Sigmoid colon (tissue), 7 donors: ENCODE measurements at regions of chr7 and their contacts with region 1.

Region 1: DNA sequence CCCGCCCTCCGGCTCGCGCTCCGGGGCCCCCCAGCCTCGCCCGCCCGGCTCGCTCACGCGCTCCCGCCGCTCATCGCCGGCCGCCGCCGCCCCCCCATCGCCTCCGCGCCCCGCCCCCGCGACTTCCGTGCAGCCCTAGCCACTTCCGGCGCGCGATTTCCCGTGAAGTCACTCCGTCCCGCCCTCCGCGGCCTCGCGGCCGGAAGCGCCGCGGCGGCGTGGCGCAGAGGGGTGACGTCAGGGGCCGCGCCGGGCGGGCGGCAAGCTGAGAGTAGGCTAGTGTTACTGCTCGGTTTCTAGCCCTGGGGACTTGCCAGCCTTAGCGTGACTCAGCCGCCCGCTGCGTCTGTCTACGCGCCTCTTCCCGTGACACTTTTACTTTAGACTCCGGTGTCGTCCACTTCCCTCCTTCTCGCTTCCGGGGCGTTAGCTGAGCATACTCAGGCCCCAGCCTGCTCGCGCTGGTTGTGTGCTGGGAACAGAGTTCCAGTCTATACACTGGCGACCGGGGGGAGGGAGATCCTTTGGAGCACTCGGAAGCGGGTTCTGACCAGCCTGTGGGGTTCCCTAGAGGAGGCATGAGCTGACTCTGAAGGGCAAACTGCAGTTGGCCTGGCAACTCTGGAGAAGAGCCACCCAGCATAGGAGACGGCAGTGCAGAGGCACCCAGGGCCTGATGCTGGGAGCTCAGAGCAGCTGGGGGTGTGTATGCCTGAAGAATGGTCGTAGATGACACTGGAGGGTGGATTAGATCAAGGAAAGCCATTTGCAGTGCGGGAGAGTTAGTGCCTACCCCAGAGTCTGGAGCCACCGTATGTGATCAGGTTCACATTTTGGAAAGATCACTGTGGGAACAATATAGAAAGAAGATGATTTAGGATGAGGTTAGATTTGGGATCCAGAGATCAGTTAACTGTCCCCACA is at the start of gene PURB:
- DNase-seq: peak; percentile 97
- H3K4me3 ChIP-seq: peak within 1 kb of the TSS; percentile 82 to 94 (median 92)
- H3K27ac ChIP-seq: peak within 1 kb of the TSS; percentile 99 to 100 (median 99)
- H3K4me1 ChIP-seq: peaks cover 0 to 52% (median 40%) of the 10 kb centered on the region in 4 donors
- H3K27me3 ChIP-seq: no peaks in the 10 kb centered on the region
- CTCF ChIP-seq: no peak
- EP300 ChIP-seq: peak in 2 of 4 donors; percentile 13 to 25
- POLR2A ChIP-seq: peak; percentile 88 to 93
- total RNA-seq, gene PURB: 31.4 to 40.3 (median 38.5) TPM

Region 2: DNA sequence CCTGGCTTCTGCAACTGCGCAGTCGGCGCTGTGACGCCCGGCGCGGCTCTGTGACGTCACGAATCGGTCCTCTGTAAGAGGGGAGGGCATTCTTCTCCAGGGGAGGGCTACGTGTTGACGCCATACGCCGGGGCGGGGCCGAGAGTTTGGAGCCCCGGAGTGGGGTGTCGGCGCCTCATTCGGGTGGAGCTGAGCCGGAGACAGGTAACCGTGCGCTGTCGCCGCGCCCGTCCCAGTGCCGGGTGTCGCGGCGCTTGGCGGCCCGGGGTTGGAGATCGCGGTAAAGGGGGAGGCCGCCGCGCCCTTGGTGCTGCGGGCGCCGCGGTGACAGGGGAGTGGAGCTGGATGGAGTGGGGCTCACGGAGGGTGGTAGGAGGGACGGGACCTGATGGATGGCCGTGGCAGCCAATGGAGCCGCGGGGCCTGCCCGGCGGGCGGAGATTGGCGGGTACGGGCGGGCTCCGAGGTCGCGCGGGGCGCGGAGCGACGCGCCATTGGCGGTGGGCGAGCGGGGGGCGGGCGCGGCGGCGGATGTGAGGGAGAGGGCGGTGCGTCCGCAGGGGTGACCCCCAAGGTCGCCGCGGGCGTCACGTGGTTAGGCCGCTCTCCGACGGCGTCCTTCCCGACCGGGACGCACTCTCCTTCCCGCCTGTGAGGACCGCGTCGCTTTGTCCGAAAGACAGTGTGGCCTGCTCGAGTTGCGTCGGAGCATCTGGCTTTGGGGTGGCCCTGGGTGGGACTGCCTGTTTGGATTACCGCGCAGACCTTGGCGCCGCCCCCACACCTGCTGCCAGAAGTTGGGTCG is 279.0 kb before region 1 on chr7 and contains the start of gene OGDH:
- intact Hi-C with region 1: loop called (anchors 5 kb)
- DNase-seq: peak; percentile 100
- H3K4me3 ChIP-seq: peak within 1 kb of the TSS; percentile 70 to 97 (median 78)
- H3K27ac ChIP-seq: peak within 1 kb of the TSS; percentile 97 to 100 (median 98)
- H3K4me1 ChIP-seq: peaks cover 0 to 32% (median 25%) of the 10 kb centered on the region in 4 donors
- H3K27me3 ChIP-seq: no peaks in the 10 kb centered on the region
- CTCF ChIP-seq: no peak
- EP300 ChIP-seq: peak in 2 of 4 donors; percentile 66 to 86
- POLR2A ChIP-seq: peak; percentile 57 to 97
- total RNA-seq, gene OGDH: 65.5 to 102 (median 98.3) TPM

Region 3: DNA sequence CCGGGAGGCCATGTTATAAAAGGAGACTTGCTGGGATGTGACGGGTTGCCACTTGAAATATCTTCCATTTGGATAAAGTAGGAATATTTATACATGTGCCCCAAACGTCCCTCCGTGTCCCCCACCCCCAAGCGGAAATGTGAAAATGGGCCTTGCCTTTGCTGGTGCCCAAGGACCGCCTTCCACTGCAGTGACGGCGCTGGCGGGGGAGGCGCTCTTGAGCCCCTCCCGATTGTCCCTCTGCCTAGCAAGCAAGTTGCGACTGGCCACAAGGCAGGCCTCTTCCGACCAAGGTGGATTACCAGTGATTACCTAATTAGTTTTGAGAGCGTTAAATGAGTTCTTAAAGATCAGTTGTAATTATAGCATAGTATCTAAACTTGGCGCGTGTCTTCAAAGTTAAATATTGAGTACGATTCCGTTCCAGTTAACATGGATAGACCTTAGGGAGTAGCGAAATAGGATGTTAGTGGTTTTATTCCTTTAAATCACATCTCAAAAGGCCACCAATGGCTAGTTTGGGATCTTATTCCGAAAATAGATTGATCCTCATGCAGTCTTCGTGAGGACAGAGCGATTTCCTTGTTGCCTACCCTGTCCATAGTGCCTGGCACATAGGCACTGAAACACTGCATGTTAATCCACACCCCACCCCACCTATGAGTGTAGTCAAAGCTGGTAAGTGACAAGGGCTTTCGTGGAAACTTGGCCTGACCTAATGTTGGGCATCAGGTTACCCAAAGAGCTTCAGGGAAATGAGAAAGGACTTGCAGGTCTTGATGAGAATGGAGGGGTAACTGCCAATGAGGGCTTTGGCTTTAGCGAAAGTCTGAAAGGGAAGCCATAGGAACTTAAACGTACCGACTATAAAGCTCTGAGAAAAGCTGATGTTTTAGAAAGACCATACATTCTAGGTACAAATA is 88.1 kb before region 1 on chr7:
- intact Hi-C with region 1: loop called (anchors 2 kb)
- DNase-seq: peak; percentile 95
- H3K4me3 ChIP-seq: peak overlapping the region; percentile 76 to 97 (median 95)
- H3K27ac ChIP-seq: peak overlapping the region; percentile 99 to 100 (median 100)
- H3K4me1 ChIP-seq: peaks cover 0 to 35% (median 26%) of the 10 kb centered on the region in 4 donors
- H3K27me3 ChIP-seq: no peaks in the 10 kb centered on the region
- CTCF ChIP-seq: peak in 2 of 4 experiments; percentile 31 to 35
- EP300 ChIP-seq: no peak
- POLR2A ChIP-seq: peak; percentile 10 to 29

Region 4: DNA sequence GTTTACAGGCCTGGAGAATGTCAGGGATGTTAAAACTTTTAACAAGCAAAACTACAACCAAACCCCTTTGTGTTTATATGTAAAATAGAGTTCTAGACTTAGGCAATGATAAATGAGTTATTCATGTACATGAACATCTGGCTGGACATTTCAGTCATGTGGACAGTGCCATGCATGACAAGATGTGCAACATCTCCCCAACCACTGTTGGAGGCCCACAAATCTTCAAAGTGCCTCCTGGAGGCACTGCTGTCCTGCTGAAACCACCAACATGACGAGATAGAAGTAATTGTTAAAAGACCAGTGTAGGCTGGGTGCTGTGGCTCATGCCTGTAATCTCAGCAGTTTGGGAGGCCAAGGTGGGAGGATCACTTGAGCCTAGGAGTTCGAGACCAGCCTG is 70.7 kb before region 1 on chr7:
- intact Hi-C with region 1: no loop called
- DNase-seq: no peak
- H3K4me3 ChIP-seq: no peak overlapping the region
- H3K27ac ChIP-seq: no peak overlapping the region
- H3K4me1 ChIP-seq: no peaks in the 10 kb centered on the region
- H3K27me3 ChIP-seq: no peaks in the 10 kb centered on the region
- CTCF ChIP-seq: no peak
- EP300 ChIP-seq: no peak
- POLR2A ChIP-seq: no peak

Region 5: DNA sequence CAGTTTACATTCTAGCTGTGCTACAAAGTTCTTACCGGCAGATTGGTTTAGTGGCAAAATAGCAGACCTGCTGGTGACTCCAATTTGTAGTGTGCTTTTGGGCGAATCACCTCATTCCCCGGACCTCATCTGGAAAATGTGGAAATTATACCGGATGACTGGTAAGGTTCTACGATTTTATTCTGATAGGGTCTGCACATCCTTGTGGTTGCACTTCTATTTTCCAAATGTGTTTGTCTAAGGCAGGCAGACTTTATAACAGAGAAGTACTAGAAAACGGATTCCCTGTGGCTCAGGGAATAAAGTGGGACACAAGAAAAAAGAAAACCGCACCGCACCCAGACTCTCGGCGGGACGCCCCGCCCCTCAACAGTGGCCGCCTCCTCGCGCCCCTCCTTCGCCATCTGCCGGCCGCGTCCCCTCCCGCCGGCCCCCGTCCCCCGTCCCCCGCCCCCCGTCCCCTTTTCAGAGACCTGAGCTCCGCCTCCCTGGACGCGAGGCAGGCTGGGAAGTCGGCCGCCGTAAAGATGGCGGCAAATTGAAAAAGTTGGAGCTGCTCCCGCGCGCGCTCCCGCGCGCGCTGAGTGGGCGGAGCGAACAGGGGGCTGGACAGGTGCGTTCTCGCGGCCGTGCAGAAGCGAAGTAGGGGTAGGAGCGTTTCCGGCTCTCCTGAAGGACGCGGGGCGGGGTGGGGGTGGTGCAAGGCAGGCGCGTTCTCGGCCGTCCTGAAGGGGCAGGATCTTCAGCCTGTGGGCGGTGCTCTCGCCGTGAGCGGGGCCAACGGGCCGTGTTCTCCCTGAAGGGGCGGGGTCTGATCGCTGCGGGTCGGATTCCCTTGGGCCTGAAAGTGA is 113.8 kb after region 1 on chr7:
- intact Hi-C with region 1: loop called (anchors 5 kb)
- DNase-seq: peak; percentile 100
- H3K4me3 ChIP-seq: peak overlapping the region; percentile 36 to 91 (median 86)
- H3K27ac ChIP-seq: peak overlapping the region; percentile 86 to 94 (median 92)
- H3K4me1 ChIP-seq: peaks cover 0 to 25% (median 13%) of the 10 kb centered on the region in 4 donors
- H3K27me3 ChIP-seq: no peaks in the 10 kb centered on the region
- CTCF ChIP-seq: no peak
- EP300 ChIP-seq: no peak
- POLR2A ChIP-seq: no peak